IMR-90 (cell line): ENCODE measurements at regions of chr17 and their contacts with region 1.

Region 1: DNA sequence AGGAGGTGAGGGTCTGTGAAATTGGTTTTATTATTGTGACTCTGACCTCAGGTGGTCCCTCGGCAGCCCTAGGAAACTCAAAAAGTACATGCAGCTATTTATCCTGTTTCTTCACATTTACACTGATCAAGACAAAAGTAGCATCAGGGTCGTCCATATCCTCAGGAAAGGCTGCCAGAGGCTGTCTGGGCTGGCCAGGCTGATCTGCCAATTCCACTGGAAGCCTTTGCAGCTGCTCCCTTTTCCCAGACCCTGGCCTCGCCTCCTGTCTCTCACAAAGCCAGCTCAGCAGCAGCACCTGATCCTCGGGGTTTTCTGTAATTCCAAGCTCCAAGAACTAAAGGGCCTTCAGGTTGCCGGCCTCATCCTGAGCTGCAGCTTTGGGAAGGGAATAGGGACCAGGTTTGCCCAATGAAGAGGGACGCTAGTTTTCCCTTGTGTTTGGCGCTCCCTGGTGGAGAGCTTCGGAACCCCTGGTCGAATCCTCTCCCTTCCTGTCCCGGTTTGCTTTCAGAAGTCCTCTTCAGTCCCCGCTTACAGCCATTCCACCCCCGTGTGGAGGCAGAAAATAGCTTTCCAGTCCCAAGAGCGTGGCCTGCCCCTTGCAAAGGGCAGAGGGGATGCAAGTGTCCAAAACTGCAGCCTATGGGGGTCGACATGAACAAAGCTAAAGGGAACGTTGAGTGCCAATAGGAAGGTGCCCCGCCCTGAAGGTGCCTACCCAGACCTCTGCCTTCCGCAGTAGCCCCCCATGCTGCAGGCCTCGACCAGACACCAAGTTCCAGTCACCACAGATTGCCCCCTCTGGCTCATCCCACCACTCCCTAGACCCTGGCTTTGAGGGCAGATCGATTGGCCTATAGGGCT is 13.4 kb downstream of the MFSD6L start:
- DNase-seq: peak; percentile 56
- ATAC-seq: peak; percentile 98
- H3K4me3 ChIP-seq: no peak overlapping the region
- H3K27ac ChIP-seq: no peak overlapping the region
- H3K4me1 ChIP-seq: no peaks in the 10 kb centered on the region
- H3K27me3 ChIP-seq: no peaks in the 10 kb centered on the region; the same call in 1 of the 2 replicates
- CTCF ChIP-seq: peak; percentile 80
- POLR2A ChIP-seq: no peak
- RAD21 ChIP-seq: peak; percentile 89

Region 2: GRCh38 chr17:8383143-8383822 is 402.5 kb before region 1 on chr17 and contains the start of gene RPL26:
- CTCF ChIA-PET with region 1: no interaction called
- POLR2A ChIA-PET with region 1: no interaction called
- dilution Hi-C with region 1: no loop called
- in situ Hi-C with region 1: no loop called
- intact Hi-C with region 1: loop called (anchors 1 kb)
- DNase-seq: peak; percentile 98
- ATAC-seq: peak; percentile 86
- H3K4me3 ChIP-seq: peak within 1 kb of the TSS; percentile 98
- H3K27ac ChIP-seq: peak within 1 kb of the TSS; percentile 89
- H3K4me1 ChIP-seq: peaks cover 14% of the 10 kb centered on the region
- H3K27me3 ChIP-seq: no peaks in the 10 kb centered on the region
- CTCF ChIP-seq: peak; percentile 84
- POLR2A ChIP-seq: peak; percentile 99
- RAD21 ChIP-seq: peak; percentile 28; the same call in 1 of the 2 replicates
- total RNA-seq, gene RPL26: 5,013 and 5,721 TPM in 2 replicates

Region 3: DNA sequence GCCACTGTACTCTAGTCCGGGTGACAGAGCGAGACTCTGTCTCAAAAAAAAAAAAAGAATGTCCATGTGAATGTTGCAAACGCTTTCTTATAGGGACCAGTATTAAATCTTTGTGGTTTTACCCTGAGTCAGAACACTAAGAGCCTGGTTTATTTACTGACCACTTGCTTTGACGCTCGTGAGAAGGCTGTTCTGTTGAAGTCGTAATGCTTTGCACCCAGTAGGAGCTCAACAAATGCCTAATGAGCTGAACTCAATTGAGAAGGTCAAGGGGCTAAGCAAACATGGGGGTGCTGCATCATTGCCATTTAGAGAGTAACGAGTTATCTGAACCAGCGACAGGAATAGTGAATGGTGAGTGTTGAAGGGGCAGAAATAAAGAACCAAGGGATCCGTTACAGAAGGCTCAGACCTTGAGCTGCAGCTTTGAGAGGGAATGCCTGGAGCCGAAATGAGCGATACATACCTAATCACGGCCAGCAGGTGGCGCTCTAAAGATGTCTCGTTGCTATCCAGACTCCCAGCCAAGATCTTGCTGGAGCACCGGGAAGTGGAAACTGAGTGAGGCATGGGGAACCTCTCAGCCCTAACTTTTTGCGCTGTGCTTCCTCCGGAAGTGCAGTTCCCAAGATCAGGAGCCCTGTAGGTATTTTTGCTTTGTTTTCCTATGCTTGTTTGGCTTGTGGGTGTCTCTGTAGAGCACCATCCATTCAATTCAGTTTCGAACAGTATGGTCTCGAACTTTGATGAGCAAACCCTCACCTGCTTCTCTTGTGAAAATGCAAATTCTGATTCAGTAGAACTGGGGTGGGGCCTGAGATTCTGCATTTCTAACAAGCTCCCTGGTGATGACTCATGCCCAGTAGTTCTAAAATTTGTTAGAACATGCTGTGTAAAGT is 375.6 kb before region 1 on chr17:
- CTCF ChIA-PET with region 1: interaction called, 7 read pairs
- POLR2A ChIA-PET with region 1: no interaction called
- dilution Hi-C with region 1: no loop called
- in situ Hi-C with region 1: loop called (anchors 10 kb)
- intact Hi-C with region 1: loop called (anchors 2 kb)
- DNase-seq: peak; percentile 82
- ATAC-seq: peak; percentile 99
- H3K4me3 ChIP-seq: no peak overlapping the region
- H3K27ac ChIP-seq: no peak overlapping the region
- H3K4me1 ChIP-seq: no peaks in the 10 kb centered on the region
- H3K27me3 ChIP-seq: peaks cover 11% of the 10 kb centered on the region
- CTCF ChIP-seq: peak; percentile 86
- POLR2A ChIP-seq: no peak
- RAD21 ChIP-seq: peak; percentile 76

Region 4: DNA sequence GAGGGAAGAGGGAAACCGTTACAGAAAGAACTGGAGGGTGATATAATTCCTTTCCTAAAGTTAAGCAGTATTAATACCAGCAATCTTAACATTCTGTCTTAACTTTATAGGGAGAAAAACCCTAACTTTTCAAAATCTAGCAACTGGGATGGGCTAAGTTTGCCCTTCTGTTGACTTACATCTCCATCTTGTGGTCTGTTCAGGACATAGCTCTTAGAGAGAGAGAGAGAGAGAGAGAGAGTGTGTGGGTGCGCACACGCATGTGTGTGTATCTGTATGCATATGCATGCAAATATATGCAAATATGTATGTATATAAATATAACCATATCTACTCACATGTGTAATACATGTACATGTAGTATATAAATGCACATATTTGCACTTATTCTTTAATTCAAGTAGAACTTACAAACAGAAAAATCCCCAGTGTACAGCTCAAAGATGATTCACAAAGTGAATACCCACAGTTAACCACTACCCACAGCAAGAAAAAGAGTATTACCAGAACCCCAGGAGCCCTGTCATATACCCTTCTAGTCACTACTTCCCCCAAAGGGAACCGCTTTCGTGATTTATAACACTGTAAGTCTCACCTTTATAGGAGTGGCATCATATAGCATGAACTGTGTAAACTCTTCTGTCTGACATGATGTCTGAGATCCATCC is 743.4 kb after region 1 on chr17:
- CTCF ChIA-PET with region 1: no interaction called
- POLR2A ChIA-PET with region 1: no interaction called
- dilution Hi-C with region 1: no loop called
- in situ Hi-C with region 1: loop called (anchors 25 kb)
- intact Hi-C with region 1: loop called (anchors 10 kb)
- DNase-seq: peak; percentile 56
- ATAC-seq: peak; percentile 88
- H3K4me3 ChIP-seq: no peak overlapping the region
- H3K27ac ChIP-seq: no peak overlapping the region
- H3K4me1 ChIP-seq: no peaks in the 10 kb centered on the region
- H3K27me3 ChIP-seq: no peaks in the 10 kb centered on the region
- CTCF ChIP-seq: peak; percentile 74
- POLR2A ChIP-seq: no peak
- RAD21 ChIP-seq: peak; percentile 82